Kidney (tissue), 22 donors: ENCODE measurements at regions of chr3 and their contacts with region 1.

Region 1: DNA sequence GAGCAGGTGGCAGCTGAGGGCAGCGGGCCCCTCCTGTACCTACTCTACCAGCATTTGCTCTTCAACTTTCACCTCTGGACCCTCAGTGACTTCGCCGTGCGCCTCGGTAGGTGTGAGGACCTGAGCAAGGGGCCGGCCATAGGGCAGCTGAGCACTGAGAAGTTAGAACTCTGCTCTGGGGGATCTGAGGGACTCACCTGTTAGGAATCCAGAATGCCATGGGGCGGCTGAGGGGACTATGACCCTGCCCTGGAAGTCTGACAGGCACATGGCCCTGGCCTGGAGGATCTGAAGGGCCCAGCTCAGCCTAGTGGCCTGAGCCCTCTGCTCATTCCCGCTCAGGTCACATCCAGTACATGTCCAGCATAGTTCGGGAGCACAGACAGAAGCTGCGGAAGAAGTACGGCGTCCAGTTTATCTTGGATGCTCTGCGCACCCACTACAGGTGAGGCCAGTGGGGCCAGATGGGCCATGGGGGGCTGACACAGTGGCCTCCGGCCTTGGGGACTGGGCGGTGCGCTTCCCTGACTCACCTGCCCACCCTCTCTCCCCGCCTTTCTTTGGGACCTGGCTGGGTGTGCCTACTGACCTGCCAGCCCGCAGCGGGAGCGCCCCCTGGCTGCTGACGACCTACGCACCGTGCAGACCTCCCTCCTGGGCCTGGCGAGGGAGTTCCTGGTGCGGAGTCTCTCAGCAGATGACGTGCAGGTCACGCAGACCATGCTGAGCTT is 18.8 kb downstream of the NBEAL2 start:
- DNase-seq: peak; percentile 74 to 89 (median 81)
- H3K4me3 ChIP-seq: no peak overlapping the region
- H3K27ac ChIP-seq: no peak overlapping the region
- H3K4me1 ChIP-seq: peaks cover 0 to 4% (median 3%) of the 10 kb centered on the region in 3 donors
- H3K27me3 ChIP-seq: no peaks in the 10 kb centered on the region
- CTCF ChIP-seq: peak; percentile 81

Region 2: DNA sequence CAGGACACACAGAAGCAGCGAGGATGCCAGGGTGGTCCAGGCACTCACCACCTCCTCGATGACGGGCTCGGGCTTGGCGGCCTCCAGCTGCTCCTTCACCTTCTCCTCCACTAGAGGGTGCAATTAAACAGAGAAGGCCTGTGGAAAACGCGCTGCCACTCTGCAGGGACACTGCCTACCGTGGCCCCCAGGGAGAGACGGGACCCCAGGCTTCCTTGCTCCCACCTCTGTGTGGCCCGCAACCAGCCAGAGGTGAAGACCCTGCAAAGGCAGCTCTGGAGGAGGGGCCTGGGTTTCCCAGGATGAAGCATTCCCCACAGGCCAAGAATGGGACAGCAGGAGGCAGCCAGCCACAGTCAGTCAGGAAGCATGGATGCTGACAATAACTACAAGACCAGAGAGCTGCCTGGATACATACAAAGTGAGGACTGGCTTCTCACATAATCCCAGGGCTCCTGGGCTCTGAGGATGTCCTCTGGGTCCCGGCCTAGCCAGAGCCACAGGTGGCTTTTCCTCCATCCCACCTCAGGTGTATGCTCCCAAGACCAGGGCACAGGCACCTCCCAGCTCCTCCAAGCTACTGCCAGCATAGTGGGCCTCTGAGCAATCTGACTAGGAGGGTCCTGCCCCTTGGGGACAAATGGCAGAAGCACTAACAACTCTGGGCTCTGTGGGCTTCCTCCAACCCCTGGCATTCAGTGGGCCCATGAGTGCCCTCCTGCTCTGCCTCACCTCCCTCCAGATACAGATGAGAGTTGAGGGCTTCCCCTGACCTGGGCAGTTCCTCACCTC is 74.5 kb before region 1 on chr3:
- intact Hi-C with region 1: loop called (anchors 10 kb)
- DNase-seq: peak in 3 of 5 donors; percentile 49 to 82 (median 51)
- H3K4me3 ChIP-seq: no peak overlapping the region
- H3K27ac ChIP-seq: no peak overlapping the region
- H3K4me1 ChIP-seq: peaks cover 0 to 23% (median 13%) of the 10 kb centered on the region in 3 donors
- H3K27me3 ChIP-seq: no peaks in the 10 kb centered on the region
- CTCF ChIP-seq: peak; percentile 68